Activated CD4-positive, alpha-beta T cell treated with anti-CD3 and anti-CD28 coated beads for 36 hours (primary cell): ENCODE measurements at regions of chr22 and their contacts with region 1.

Region 1: GRCh38 chr22:50507991-50508884 is at the start of gene NCAPH2:
- DNase-seq: peak; percentile 99
- ATAC-seq: peak; percentile 79
- H3K4me3 Mint-ChIP-seq: peak within 1 kb of the TSS; percentile 91
- H3K27ac Mint-ChIP-seq: peak within 1 kb of the TSS; percentile 95
- H3K4me1 Mint-ChIP-seq: peaks cover 23% of the 10 kb centered on the region
- H3K27me3 Mint-ChIP-seq: no peaks in the 10 kb centered on the region
- total RNA-seq, gene NCAPH2: 115 to 123 TPM

Region 2: GRCh38 chr22:49852898-49853894 is 655.0 kb before region 1 on chr22 and contains the start of gene ZBED4:
- CTCF ChIA-PET with region 1: no interaction called
- POLR2A ChIA-PET with region 1: no interaction called
- intact Hi-C with region 1: loop called in 1 of 2 experiments (anchors 1 kb)
- DNase-seq: peak; percentile 99
- ATAC-seq: peak; percentile 88
- H3K4me3 Mint-ChIP-seq: peak within 1 kb of the TSS; percentile 96
- H3K27ac Mint-ChIP-seq: peak within 1 kb of the TSS; percentile 87
- H3K4me1 Mint-ChIP-seq: peaks cover 36% of the 10 kb centered on the region
- H3K27me3 Mint-ChIP-seq: peaks cover 8% of the 10 kb centered on the region
- total RNA-seq, gene ZBED4: 17.3 to 17.4 TPM

Region 3: DNA sequence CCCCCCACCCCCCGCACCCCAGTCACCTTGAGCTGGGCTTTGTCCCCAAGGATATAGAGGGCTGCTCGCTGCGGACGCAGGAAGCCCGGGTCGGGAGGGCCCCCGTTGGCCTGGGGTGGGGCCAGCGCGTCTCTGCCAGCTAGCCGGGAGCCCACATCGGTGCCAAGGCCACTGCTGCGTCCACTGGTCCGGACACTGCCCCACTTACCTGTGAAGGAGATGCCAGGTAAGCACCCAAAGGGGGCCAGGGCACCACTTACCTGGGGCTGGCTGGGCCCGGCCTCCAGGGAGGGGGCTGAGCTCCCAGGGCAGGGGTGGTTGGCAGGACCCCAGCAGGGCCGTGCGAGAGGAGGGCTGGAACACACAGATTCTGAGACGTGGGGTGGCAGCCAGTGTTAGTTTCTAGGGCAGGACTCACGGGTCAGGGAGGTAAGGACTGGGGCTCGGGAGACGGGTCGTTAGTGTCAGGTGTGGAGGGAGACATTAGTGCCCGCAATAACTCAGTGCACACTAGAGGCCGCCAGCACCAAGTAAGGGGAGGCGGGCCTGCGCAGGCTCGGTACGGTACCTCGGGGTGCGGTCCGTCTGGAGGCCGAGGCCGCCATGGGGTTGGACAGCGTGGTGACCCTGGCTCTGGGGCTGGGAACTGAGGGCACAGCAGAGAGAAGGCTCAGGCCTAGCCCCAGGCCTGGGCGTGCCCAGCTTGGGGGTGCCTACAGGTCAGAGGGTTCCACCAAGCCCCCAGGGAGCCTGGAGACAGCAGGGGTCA is 51.6 kb before region 1 on chr22:
- CTCF ChIA-PET with region 1: no interaction called
- POLR2A ChIA-PET with region 1: no interaction called
- intact Hi-C with region 1: loop called in 1 of 2 experiments (anchors 10 kb)
- DNase-seq: peak; percentile 52
- ATAC-seq: peak; percentile 57
- H3K4me3 Mint-ChIP-seq: no peak overlapping the region
- H3K27ac Mint-ChIP-seq: no peak overlapping the region
- H3K4me1 Mint-ChIP-seq: peaks cover 11% of the 10 kb centered on the region
- H3K27me3 Mint-ChIP-seq: no peaks in the 10 kb centered on the region

Region 4: DNA sequence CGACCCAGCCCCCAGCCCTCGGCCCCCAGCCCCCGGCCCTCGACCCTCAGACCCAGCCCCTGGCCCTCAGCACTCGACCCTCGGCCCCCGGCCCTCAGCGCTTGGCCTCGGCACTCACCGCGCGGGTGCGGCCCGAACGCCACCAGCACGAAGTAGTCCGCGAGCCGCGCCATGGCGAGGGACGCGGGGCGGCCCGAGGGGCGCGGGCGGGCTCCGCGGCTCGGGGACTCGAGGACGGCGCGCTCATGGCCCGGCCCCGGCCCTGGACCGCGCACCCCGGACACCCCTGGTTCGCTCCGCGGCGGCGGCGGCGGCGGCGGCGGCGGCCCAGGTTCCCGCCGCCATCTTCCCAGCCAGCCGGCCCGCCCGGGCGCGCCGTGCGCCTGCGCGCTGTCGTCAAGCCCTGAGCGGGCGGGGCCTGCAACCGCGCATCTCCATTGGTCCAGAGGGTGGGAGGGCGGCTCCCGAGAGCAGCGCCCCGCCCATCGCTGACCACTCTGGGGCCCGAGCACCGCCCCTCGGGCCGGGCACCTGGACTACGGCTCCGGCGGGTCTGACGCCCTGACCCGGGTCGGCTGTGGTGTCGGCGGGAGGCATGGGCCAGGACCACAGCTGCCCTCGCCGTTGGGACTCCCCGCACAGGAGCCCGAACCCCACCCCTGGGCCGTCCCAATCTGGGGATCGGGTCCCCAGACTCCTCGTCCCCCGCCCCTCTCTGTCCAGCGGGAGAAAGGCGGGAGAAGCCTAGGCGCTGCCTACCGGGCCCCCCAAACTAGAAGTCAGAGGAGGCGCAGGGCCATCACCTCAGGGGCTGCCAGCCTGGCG is 33.4 kb before region 1 on chr22 and contains the start of gene SBF1:
- CTCF ChIA-PET with region 1: interaction called, 3 read pairs
- POLR2A ChIA-PET with region 1: interaction called, 10 read pairs
- intact Hi-C with region 1: loop called (anchors 1 to 2 kb)
- DNase-seq: peak; percentile 95
- ATAC-seq: peak; percentile 78
- H3K4me3 Mint-ChIP-seq: peak within 1 kb of the TSS; percentile 89
- H3K27ac Mint-ChIP-seq: peak within 1 kb of the TSS; percentile 83
- H3K4me1 Mint-ChIP-seq: peaks cover 42% of the 10 kb centered on the region
- H3K27me3 Mint-ChIP-seq: peaks cover 2% of the 10 kb centered on the region
- total RNA-seq, gene SBF1: 97.6 TPM

Region 5: GRCh38 chr22:50525390-50526068 is 17.3 kb after region 1 on chr22 and contains the start of gene SCO2:
- CTCF ChIA-PET with region 1: interaction called, 76 read pairs
- POLR2A ChIA-PET with region 1: interaction called, 65 read pairs
- intact Hi-C with region 1: loop called (anchors 1 kb)
- DNase-seq: peak; percentile 99
- ATAC-seq: peak; percentile 56
- H3K4me3 Mint-ChIP-seq: peak within 1 kb of the TSS; percentile 77
- H3K27ac Mint-ChIP-seq: peak within 1 kb of the TSS; percentile 87
- H3K4me1 Mint-ChIP-seq: peaks cover 34% of the 10 kb centered on the region
- H3K27me3 Mint-ChIP-seq: no peaks in the 10 kb centered on the region
- total RNA-seq, gene SCO2: 2.4 to 5.6 TPM

Region 6: GRCh38 chr22:50544078-50544745 is 36.0 kb after region 1 on chr22:
- CTCF ChIA-PET with region 1: interaction called, 8 read pairs
- POLR2A ChIA-PET with region 1: interaction called, 9 read pairs
- intact Hi-C with region 1: loop called (anchors 1 kb)
- DNase-seq: peak; percentile 94
- ATAC-seq: peak; percentile 49
- H3K4me3 Mint-ChIP-seq: peak overlapping the region; percentile 35
- H3K27ac Mint-ChIP-seq: peak overlapping the region; percentile 78
- H3K4me1 Mint-ChIP-seq: peaks cover 61% of the 10 kb centered on the region
- H3K27me3 Mint-ChIP-seq: no peaks in the 10 kb centered on the region

Region 7: GRCh38 chr22:50627642-50628542 is 119.7 kb after region 1 on chr22 and contains the start of gene ARSA:
- CTCF ChIA-PET with region 1: interaction called, 3 read pairs
- POLR2A ChIA-PET with region 1: interaction called, 3 read pairs
- intact Hi-C with region 1: loop called in 1 of 2 experiments (anchors 1 kb)
- DNase-seq: peak; percentile 87
- ATAC-seq: peak; percentile 94
- H3K4me3 Mint-ChIP-seq: peak within 1 kb of the TSS; percentile 76
- H3K27ac Mint-ChIP-seq: peak within 1 kb of the TSS; percentile 75
- H3K4me1 Mint-ChIP-seq: peaks cover 16% of the 10 kb centered on the region
- H3K27me3 Mint-ChIP-seq: no peaks in the 10 kb centered on the region
- total RNA-seq, gene ARSA: 14.9 to 15.4 TPM

Region 8: GRCh38 chr22:50641696-50642607 is 133.7 kb after region 1 on chr22:
- CTCF ChIA-PET with region 1: no interaction called
- POLR2A ChIA-PET with region 1: no interaction called
- intact Hi-C with region 1: no loop called
- DNase-seq: no peak
- ATAC-seq: no peak
- H3K4me3 Mint-ChIP-seq: no peak overlapping the region
- H3K27ac Mint-ChIP-seq: no peak overlapping the region
- H3K4me1 Mint-ChIP-seq: no peaks in the 10 kb centered on the region
- H3K27me3 Mint-ChIP-seq: peaks cover 8% of the 10 kb centered on the region